ENCODE measurements at regions of chr6 and their contacts with region 1.

Region 1: DNA sequence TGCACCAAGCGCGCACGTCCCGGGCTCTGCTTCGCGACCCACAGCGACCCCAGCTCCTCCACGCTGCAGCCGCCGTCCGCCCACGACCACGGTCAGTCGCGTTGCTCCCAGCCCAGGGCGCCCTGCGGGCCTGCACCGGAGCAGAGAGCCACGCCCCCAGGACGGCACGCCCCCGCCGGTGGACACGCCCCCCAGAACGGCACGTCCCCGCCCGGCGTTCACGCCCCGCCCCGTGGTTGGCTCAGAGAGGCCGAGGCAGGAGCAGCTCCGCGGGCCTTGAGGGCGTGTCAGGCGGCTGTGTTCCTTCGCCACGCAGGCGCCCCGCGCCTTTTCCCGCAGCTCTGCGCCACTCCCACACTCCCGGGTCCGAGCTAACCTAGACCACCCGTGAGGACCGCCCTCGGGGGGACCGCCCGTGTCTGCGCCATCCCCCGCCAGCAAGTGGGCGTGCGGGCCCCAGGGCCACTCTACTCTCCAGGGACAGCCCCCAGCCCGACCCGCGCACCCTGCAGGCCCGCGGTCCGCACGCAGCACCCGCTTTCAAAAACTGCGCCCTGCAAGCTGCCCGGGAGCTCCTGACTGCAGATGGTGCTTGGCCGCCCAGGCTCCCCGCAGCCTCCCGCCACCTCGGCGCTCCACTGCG is at the start of gene RNASET2:
- DNase-seq: peak; percentile 93
- CTCF ChIP-seq: no peak

Region 2: DNA sequence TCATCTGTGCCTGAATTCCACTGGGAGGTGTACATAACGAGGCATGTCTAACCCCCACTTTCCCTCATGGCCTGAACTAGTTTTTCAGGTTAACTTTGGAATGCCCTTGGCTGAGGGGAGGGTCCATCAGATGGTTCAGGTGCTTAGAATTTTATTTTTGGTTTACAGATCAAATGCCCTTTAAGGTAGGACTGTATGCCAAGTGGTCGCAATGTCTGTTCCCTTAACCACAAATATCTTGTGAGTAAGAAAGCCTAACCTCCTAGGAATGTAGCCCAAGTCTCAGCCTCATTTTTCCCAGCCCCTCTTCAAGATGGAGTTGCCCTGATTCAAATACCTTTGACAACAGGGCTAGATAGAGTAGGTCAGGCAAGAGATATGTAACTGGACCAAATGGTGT is 78.7 kb before region 1 on chr6:
- CTCF ChIA-PET with region 1: no interaction called
- POLR2A ChIA-PET with region 1: no interaction called
- DNase-seq: no peak
- CTCF ChIP-seq: no peak

Region 3: GRCh38 chr6:166940643-166941068 is 15.9 kb before region 1 on chr6:
- CTCF ChIA-PET with region 1: interaction called, 24 read pairs
- POLR2A ChIA-PET with region 1: no interaction called
- DNase-seq: no peak
- CTCF ChIP-seq: no peak

Region 4: DNA sequence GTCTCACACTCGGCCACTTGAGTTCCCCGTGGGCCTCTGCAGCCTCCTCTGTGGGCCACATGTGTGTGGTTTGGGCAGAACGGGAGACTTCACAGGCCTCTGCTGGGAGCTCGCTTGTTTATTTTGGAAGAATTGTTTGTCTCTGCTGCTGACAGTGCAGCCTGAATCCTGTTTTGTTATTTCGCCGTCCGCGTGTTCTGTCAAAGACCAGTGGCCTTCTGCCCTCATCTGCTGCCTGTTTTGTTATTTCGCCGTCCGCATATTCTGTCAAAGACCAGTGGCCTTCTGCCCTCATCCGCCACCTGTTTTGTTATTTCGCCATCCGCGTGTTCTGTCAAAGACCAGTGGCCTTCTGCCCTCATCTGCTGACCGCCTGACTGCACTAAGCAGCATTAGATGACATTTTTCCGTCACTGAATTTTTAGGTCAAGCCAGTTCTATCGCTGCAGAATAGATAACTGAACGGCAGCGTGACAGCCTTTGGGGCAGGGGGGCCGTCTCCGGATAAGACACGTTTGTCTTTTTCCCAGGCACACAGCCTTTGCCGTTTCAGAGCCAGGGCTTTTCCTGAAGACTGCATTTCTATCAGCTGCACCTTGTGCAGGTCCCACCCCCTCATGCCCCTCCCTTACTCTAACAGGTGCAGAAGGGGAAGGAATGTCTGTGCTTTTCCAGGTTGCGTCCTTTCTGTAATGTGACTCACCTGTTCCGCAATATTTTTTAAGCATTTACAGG is 711.6 kb after region 1 on chr6:
- CTCF ChIA-PET with region 1: no interaction called
- POLR2A ChIA-PET with region 1: no interaction called
- DNase-seq: no peak
- CTCF ChIP-seq: no peak